ENCODE measurements at regions of chr10 and their contacts with region 1.

Region 1: DNA sequence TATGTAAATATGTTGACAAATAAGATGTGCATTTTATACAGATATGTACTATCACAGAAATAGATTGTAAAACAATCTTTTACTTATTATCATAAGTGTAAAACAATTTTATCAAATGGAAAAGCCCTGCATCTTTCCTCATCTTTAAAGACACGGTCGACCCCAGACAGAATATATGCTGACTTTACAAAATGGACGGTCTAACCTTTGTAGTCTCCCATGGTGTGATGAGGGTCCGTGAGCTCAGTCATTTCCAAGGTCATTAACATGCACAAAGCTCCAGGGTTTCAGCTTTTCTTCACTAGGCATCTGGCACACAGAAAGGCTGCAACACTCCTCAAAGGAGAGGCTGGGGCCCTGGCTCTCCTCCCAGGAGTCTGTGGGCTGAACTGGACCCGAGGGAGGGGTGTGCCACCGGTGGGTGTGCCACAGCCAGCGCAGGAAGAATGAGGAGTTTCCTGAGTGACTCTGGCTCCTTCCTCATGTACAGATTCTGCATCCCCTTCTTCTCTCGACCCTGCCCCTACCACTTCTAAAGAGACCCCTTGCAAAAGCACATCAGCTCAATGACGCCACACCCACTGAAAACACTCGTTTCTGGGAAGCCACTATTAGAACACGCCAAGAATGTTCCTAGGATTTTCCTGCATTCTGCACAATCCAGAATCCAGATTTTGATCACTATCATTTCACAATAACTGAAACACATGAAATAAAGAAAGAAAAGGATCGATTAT is 26.2 kb upstream of the ABLIM1 start:
- DNase-seq: peak; percentile 74
- H3K4me3 Mint-ChIP-seq: peak overlapping the region; percentile 67
- H3K27ac Mint-ChIP-seq: peak overlapping the region; percentile 74
- H3K4me1 Mint-ChIP-seq: peaks cover 33% of the 10 kb centered on the region
- H3K27me3 Mint-ChIP-seq: no peaks in the 10 kb centered on the region
- CTCF ChIP-seq: no peak

Region 2: GRCh38 chr10:114631666-114632417 is 52.4 kb before region 1 on chr10:
- CTCF ChIA-PET with region 1: interaction called, 5 read pairs
- POLR2A ChIA-PET with region 1: interaction called, 35 read pairs
- intact Hi-C with region 1: loop called (anchors 5 kb)
- DNase-seq: no peak
- H3K4me3 Mint-ChIP-seq: peak overlapping the region; percentile 73
- H3K27ac Mint-ChIP-seq: no peak overlapping the region
- H3K4me1 Mint-ChIP-seq: peaks cover 64% of the 10 kb centered on the region
- H3K27me3 Mint-ChIP-seq: no peaks in the 10 kb centered on the region
- CTCF ChIP-seq: no peak

Region 3: DNA sequence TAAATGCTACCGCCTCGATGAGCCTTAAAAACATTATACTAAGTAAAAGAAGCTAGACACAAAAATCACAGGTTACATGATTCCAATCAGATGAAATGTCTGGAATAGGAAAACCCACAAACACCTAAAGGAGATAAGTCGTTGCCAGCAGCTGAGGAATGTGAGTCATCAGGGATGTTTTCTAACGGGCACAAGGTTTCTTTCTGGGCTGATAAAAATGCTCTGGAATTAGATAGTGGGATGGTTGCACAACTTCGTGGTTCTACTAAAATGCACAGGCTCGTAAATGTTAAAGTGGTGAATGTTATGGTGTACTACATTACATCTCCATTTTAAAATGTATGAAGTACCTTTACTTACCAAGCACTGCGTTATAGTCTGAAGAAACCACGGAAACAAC is 35.9 kb before region 1 on chr10:
- CTCF ChIA-PET with region 1: interaction called, 3 read pairs
- POLR2A ChIA-PET with region 1: interaction called, 16 read pairs
- intact Hi-C with region 1: no loop called
- DNase-seq: peak; percentile 69
- H3K4me3 Mint-ChIP-seq: peak overlapping the region; percentile 6
- H3K27ac Mint-ChIP-seq: peak overlapping the region; percentile 21
- H3K4me1 Mint-ChIP-seq: peaks cover 25% of the 10 kb centered on the region
- H3K27me3 Mint-ChIP-seq: no peaks in the 10 kb centered on the region
- CTCF ChIP-seq: no peak

Region 4: DNA sequence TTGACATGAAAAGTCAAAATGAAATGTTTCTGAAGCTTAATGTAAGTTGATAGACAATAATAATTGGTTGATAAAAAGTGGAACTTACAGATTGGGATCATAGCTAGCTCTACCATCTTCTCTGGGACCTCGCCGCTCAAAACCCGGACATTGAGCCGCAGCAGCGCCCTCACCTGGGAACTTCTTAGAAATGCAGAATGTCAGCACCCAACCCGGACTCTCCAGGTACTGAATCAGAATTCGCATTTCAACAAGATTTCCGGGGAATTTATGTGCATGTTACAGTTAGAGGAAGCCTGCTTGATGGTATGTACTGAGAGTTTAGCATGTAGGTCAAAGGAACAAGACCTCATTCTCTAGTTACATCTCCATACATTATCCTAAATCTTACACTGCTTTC is 10.5 kb after region 1 on chr10:
- CTCF ChIA-PET with region 1: interaction called, 6 read pairs
- POLR2A ChIA-PET with region 1: interaction called, 37 read pairs
- intact Hi-C with region 1: no loop called
- DNase-seq: peak; percentile 60
- H3K4me3 Mint-ChIP-seq: no peak overlapping the region
- H3K27ac Mint-ChIP-seq: no peak overlapping the region
- H3K4me1 Mint-ChIP-seq: peaks cover 42% of the 10 kb centered on the region
- H3K27me3 Mint-ChIP-seq: no peaks in the 10 kb centered on the region
- CTCF ChIP-seq: peak; percentile 38

Region 5: GRCh38 chr10:114714281-114714741 is 30.1 kb after region 1 on chr10:
- CTCF ChIA-PET with region 1: no interaction called
- POLR2A ChIA-PET with region 1: interaction called, 10 read pairs
- intact Hi-C with region 1: no loop called
- DNase-seq: peak; percentile 97
- H3K4me3 Mint-ChIP-seq: peak overlapping the region; percentile 55
- H3K27ac Mint-ChIP-seq: peak overlapping the region; percentile 87
- H3K4me1 Mint-ChIP-seq: peaks cover 40% of the 10 kb centered on the region
- H3K27me3 Mint-ChIP-seq: no peaks in the 10 kb centered on the region
- CTCF ChIP-seq: no peak

Measured in MCF 10A (cell line).